Psoas muscle (tissue), 8 donors: ENCODE measurements at regions of chr14 and their contacts with region 1.

Region 1: GRCh38 chr14:105168979-105169507 is 467 bp upstream of the JAG2 start:
- DNase-seq: no peak
- ATAC-seq: peak in 3 of 4 donors; percentile 2 to 4 (median 2)
- H3K4me3 ChIP-seq: peak overlapping the region; percentile 56
- H3K27ac ChIP-seq: peak overlapping the region; percentile 82
- H3K4me1 ChIP-seq: peaks cover 59% of the 10 kb centered on the region
- H3K27me3 ChIP-seq: no peaks in the 10 kb centered on the region
- CTCF ChIP-seq: peak; percentile 40

Region 2: DNA sequence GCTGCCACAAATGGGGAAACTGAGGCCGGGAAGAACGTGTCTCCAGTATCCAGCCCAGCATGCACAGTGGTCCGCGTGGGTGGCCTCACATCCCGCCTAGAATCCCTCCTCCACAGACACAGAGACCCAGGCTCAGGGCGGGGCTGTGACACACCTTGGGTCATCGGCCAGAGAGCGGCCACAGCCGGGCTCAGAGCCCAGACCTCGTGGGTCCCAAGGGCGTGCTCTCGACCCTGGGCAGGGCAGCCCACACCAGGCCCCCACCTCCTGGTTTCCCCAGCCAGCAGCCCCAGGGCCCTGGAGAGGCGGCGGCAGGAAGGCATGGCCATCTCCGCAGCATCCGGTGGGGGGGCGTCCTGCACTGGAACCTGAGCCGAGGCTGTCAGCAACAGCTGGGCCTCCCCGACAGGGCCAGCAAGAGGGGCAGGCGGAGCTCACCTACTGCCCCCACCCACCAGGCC is 15.7 kb before region 1 on chr14:
- intact Hi-C with region 1: loop called in 1 of 2 experiments (anchors 2 kb)
- DNase-seq: peak; percentile 65 to 81
- ATAC-seq: peak; percentile 38 to 65 (median 60)
- H3K4me3 ChIP-seq: no peak overlapping the region
- H3K27ac ChIP-seq: peak overlapping the region; percentile 96
- H3K4me1 ChIP-seq: peaks cover 20% of the 10 kb centered on the region
- H3K27me3 ChIP-seq: no peaks in the 10 kb centered on the region
- CTCF ChIP-seq: no peak